Endothelial cell of umbilical vein (primary cell): ENCODE measurements at regions of chr17 and their contacts with region 1.

Region 1: GRCh38 chr17:55770148-55770870 is 19.5 kb downstream of the PCTP start:
- DNase-seq: peak; percentile 49
- H3K4me3 ChIP-seq: no peak overlapping the region
- H3K27ac ChIP-seq: no peak overlapping the region
- H3K4me1 ChIP-seq: no peaks in the 10 kb centered on the region
- H3K27me3 ChIP-seq: no peaks in the 10 kb centered on the region
- CTCF ChIP-seq: peak; percentile 31 to 33
- POLR2A ChIP-seq: no peak

Region 2: DNA sequence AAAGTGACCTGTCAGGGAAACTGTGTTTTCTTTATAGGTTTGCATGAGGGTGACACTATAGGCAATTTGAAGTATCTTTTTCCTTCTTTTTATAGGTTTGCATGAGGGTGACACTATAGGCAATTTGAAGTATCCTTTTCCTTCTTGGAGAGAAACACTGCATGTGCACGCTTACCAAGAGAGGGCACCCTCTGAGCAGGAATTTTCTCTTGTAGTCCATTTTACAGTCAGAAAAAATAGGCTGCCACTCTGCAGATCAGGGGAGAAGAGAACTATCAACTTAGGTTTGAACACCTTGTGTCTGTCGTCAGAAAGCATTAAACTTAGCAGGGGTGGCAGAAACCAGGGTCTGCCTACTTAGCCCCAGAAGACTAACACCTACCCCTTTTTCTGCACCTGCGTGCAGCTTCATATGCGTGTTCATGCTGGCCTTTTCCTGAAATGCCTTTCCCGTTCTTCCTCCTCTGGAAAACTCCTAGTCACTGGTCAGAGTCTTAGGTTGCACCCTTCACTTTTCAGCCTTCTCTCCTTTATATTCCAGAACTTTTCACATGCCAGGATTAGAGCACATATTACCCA is 242.7 kb before region 1 on chr17:
- CTCF ChIA-PET with region 1: interaction called, 60 read pairs
- POLR2A ChIA-PET with region 1: no interaction called
- dilution Hi-C with region 1: no loop called
- intact Hi-C with region 1: loop called (anchors 1 kb)
- DNase-seq: peak; percentile 71
- H3K4me3 ChIP-seq: no peak overlapping the region
- H3K27ac ChIP-seq: no peak overlapping the region
- H3K4me1 ChIP-seq: no peaks in the 10 kb centered on the region
- H3K27me3 ChIP-seq: peaks cover 0 to 3% of the 10 kb centered on the region in 2 experiments
- CTCF ChIP-seq: peak; percentile 48 to 69
- POLR2A ChIP-seq: no peak

Region 3: DNA sequence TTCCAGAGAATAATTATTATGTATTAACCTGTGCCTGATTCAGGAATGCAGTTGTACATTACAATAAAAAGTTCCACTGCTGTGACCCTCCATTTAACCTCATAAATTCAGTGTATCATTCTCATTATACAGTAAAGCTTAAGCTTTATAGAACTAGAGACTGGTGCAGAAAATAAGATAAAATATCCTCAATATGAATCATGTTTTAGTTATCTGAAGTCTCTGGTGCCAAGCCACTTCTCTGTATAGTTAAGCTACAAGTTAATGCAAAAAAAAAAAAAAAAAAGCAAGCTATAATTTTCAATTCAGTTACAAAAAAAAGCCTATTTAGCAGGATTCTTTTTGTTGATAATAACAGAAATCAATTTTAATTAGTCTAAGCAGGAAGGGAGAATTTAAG is 236.7 kb before region 1 on chr17:
- CTCF ChIA-PET with region 1: interaction called, 12 read pairs
- POLR2A ChIA-PET with region 1: no interaction called
- dilution Hi-C with region 1: no loop called
- intact Hi-C with region 1: no loop called
- DNase-seq: peak; percentile 28
- H3K4me3 ChIP-seq: no peak overlapping the region
- H3K27ac ChIP-seq: no peak overlapping the region
- H3K4me1 ChIP-seq: peaks cover 18% of the 10 kb centered on the region
- H3K27me3 ChIP-seq: no peaks in the 10 kb centered on the region
- CTCF ChIP-seq: no peak
- POLR2A ChIP-seq: no peak

Region 4: DNA sequence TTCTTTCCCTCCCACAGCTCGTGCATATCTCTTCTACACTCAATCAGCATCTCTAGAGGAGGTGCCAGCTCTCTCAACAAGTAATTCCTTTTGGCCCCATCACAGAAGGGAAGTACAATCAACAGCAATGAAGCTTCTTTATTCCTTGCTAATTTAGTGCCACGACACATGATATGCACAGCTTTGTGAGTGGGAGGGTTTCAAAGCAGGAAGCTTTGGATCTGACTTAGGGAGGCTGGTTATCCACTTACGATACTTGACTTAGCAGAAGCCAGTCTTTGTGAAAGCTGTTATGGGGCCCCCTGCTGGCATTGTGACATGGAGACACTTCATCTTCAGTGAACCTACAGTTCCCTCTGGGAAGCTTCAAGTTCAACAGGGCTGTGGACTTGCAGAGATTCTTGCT is 128.6 kb before region 1 on chr17:
- CTCF ChIA-PET with region 1: interaction called, 28 read pairs
- POLR2A ChIA-PET with region 1: no interaction called
- dilution Hi-C with region 1: no loop called
- intact Hi-C with region 1: loop called (anchors 1 kb)
- DNase-seq: peak; percentile 77
- H3K4me3 ChIP-seq: no peak overlapping the region
- H3K27ac ChIP-seq: no peak overlapping the region
- H3K4me1 ChIP-seq: no peaks in the 10 kb centered on the region
- H3K27me3 ChIP-seq: peaks cover 0 to 3% of the 10 kb centered on the region in 2 experiments
- CTCF ChIP-seq: peak; percentile 56 to 80
- POLR2A ChIP-seq: no peak

Region 5: DNA sequence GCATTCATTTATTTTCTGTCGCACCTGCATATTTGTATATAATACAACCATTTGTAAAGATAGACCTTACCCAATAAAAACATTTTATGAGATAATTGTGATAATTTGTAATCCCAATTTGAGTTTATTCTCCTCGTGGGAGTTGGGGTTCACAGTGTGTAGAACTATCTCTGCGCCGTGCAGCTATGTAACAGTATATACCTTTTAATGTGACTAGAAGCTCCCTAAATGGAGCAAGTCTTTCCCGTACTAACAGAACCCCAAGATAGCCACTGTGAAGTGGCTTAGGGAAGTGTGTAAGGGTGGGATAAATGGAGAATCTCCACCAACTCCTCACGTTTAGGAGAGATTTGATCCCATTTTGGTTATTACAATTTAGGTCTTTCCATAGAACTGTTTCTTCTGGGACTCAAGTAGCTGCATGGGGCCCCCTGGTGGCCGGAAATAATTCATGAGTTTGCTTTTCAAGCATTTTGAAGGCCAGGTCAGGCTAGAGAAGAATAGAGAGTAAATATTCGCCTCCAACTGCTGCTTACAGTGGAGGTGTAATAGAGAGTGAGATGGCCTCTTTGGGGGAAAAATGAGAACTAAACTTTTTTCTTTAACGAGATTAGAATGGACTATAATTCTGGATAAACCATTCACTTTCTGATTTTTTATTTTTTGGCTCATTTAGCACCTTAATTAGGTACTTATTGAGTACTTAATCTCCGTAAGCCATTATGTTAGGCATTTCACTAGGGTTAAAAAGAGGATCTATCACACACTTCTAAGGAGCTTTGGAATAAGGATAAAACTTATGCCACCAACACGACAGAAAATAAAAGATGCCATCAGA is 52.2 kb before region 1 on chr17:
- CTCF ChIA-PET with region 1: interaction called, 42 read pairs
- POLR2A ChIA-PET with region 1: no interaction called
- dilution Hi-C with region 1: no loop called
- intact Hi-C with region 1: loop called (anchors 1 kb)
- DNase-seq: peak; percentile 72
- H3K4me3 ChIP-seq: no peak overlapping the region
- H3K27ac ChIP-seq: no peak overlapping the region
- H3K4me1 ChIP-seq: peaks cover 2% of the 10 kb centered on the region
- H3K27me3 ChIP-seq: peaks cover 0 to 4% of the 10 kb centered on the region in 2 experiments
- CTCF ChIP-seq: peak; percentile 60 to 66
- POLR2A ChIP-seq: no peak

Region 6: DNA sequence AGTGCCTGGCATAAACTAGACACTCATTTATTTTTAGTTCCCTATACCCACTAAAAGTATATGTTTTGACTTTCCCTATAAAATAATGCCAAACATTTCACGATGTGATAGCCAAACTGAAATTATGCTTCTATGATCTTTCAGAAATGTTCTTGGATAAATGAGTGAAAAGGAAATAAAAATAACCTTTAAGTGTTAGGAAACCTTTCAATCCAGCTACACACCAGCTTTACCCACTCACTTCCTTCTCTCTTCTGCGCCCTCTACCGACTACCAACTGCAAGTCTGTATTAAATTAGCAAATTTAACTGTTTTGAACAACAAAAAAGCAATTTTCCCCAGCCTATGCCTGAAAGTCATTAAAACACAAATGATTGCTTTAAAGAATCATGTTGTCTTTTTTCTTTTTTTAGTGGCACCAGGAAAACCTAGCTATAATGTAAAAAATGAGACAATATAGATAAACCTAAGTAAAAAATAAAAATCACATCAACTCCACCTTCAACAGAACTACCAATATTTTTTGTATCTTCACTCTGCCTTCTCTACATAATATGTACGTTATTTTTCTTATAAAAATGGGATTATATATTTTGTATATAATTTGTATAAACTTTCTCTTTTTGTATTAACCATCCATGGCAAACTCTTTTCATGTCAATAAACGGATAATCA is 34.4 kb before region 1 on chr17:
- CTCF ChIA-PET with region 1: interaction called, 8 read pairs
- POLR2A ChIA-PET with region 1: no interaction called
- dilution Hi-C with region 1: no loop called
- intact Hi-C with region 1: loop called (anchors 2 kb)
- DNase-seq: peak; percentile 32
- H3K4me3 ChIP-seq: no peak overlapping the region
- H3K27ac ChIP-seq: no peak overlapping the region
- H3K4me1 ChIP-seq: no peaks in the 10 kb centered on the region
- H3K27me3 ChIP-seq: no peaks in the 10 kb centered on the region
- CTCF ChIP-seq: peak; percentile 44 to 54
- POLR2A ChIP-seq: no peak

Region 7: GRCh38 chr17:55750750-55751657 is 19.3 kb before region 1 on chr17 and contains the start of gene PCTP:
- CTCF ChIA-PET with region 1: interaction called, 13 read pairs
- POLR2A ChIA-PET with region 1: no interaction called
- dilution Hi-C with region 1: no loop called
- intact Hi-C with region 1: no loop called
- DNase-seq: peak; percentile 88
- H3K4me3 ChIP-seq: peak within 1 kb of the TSS; percentile 55 to 75 (median 69)
- H3K27ac ChIP-seq: peak within 1 kb of the TSS; percentile 47
- H3K4me1 ChIP-seq: peaks cover 5% of the 10 kb centered on the region
- H3K27me3 ChIP-seq: no peaks in the 10 kb centered on the region
- CTCF ChIP-seq: peak; percentile 37 to 72
- POLR2A ChIP-seq: peak; percentile 36
- total RNA-seq, gene PCTP: 13.5 and 14.5 TPM in 2 replicates

Region 8: DNA sequence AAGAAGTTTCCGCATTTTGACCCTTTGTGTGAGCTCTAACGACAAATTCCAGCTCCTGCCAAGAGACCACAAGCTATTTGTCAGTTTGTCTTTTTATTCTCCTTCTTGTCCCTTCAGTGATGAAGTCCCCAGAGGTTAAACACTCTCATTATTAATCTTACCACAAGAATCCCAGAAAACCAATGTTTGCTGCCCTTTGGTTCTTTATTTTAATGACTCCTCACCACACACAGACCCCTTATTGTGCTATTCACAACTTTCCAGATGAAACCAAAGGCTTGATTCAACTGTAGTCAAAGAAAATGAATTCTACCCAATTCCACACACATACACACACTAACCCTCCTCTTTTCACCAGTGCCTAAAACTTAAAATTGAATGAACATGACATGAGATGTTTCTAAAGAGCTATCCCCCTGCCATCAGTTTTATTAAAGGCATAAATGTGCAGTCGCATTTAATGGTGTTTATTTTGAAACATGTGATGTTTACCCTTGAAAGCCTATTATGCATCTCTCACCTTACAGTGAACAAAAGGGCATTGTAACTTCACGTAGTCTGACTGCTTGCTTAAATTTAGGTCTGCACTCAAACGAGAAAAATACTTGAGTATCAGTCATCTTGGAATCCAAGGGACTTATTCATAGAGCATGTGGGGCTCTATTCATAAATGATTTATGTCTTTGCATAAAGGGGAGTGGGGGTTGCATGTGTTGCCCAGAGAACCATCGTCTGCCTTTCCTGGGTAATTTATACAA is 24.6 kb after region 1 on chr17:
- CTCF ChIA-PET with region 1: no interaction called
- POLR2A ChIA-PET with region 1: no interaction called
- dilution Hi-C with region 1: no loop called
- intact Hi-C with region 1: no loop called
- DNase-seq: no peak
- H3K4me3 ChIP-seq: no peak overlapping the region
- H3K27ac ChIP-seq: no peak overlapping the region
- H3K4me1 ChIP-seq: no peaks in the 10 kb centered on the region
- H3K27me3 ChIP-seq: peaks cover 0 to 4% of the 10 kb centered on the region in 2 experiments
- CTCF ChIP-seq: no peak
- POLR2A ChIP-seq: no peak

Region 9: GRCh38 chr17:55830699-55831445 is 60.6 kb after region 1 on chr17:
- CTCF ChIA-PET with region 1: no interaction called
- POLR2A ChIA-PET with region 1: no interaction called
- dilution Hi-C with region 1: no loop called
- intact Hi-C with region 1: no loop called
- DNase-seq: no peak
- H3K4me3 ChIP-seq: no peak overlapping the region
- H3K27ac ChIP-seq: no peak overlapping the region
- H3K4me1 ChIP-seq: no peaks in the 10 kb centered on the region
- H3K27me3 ChIP-seq: no peaks in the 10 kb centered on the region
- CTCF ChIP-seq: no peak
- POLR2A ChIP-seq: no peak

Region 10: DNA sequence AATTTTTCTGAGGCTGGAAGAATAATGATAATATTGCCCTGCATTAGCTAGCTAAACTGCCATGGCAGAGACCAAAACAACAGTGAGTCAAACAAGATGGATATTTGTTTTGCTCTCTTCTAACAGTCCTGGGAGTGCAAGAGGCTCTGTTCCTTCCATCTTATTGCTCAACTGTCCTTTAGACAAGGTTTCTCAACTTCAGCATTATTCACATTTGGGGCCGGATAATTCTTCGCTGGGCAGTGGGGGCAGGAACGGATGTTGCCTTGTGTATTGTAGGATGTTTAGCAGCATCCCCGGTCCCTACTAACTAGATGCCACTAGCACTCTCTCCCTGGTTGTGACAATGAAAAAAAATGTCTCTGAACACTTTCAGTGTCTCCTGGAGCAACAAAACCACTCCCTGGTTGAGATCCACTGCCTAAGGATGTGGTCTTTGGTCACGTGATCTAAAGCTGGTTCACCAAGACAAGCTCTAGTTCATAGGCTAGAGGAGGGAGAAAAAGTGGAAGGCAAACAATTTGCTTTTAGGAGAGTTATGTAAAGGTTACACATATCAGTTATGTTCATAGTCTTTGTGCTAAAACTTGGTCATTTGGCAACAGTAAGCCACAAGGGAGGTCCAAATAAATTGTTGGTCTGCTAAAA is 124.9 kb after region 1 on chr17:
- CTCF ChIA-PET with region 1: no interaction called
- POLR2A ChIA-PET with region 1: no interaction called
- dilution Hi-C with region 1: no loop called
- intact Hi-C with region 1: no loop called
- DNase-seq: no peak
- H3K4me3 ChIP-seq: no peak overlapping the region
- H3K27ac ChIP-seq: no peak overlapping the region
- H3K4me1 ChIP-seq: no peaks in the 10 kb centered on the region
- H3K27me3 ChIP-seq: no peaks in the 10 kb centered on the region
- CTCF ChIP-seq: no peak
- POLR2A ChIP-seq: no peak